ENCODE measurements at regions of chr2 and their contacts with region 1.

Region 1: DNA sequence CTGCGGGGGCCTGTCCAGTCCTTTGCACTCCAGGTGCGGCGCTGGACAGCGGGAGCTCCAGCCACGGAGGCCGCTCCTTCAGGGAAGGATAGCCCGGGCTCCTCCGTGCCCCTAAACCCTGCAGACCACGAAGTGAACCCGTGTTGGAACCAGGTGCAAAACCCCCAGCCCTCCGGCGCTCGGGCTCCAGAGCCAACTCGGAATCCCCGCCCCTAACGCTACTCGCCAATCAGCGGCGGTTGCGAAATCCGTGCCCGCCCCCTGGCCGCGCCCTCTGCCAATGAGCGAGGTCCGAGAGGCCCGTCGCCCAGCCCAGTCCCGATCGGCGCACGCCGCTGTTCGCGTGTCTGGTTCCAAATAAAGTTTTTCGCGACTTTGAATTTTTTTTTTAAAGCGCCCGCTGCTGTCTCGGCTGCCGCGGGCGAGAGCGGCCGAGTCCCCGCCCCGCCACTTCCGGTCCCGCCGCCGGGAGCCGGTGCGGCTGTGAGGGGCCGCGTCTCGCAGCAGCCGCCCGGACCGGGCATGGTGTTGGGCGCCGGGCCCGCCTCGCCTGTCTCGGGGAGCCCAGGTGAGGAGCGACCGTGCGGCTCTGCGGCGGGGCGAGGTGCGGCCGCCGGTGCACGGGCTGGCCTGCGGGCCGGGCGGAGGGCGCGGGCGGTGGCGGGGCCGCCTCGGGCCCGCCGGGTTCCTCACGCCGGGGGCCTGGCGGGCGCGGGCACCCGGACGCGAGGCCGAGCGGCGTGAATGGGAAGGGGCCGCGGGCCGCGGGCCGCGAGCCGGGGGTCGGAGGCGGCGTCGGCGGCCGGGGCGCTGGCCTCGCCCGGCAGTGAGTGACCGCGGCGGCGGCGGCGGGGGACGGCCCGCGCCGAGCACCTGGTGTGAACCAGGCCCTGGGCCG is at the start of gene UBE2F:
- DNase-seq: peak; percentile 97
- ATAC-seq: peak; percentile 94
- H3K4me3 ChIP-seq: peak within 1 kb of the TSS; percentile 54 to 96 (median 73)
- H3K4me3 Mint-ChIP-seq: peak within 1 kb of the TSS; percentile 81
- H3K27ac ChIP-seq: peak within 1 kb of the TSS; percentile 45 to 50
- H3K27ac Mint-ChIP-seq: peak within 1 kb of the TSS; percentile 88
- H3K4me1 ChIP-seq: peaks cover 27 to 32% of the 10 kb centered on the region in 2 donors
- H3K4me1 Mint-ChIP-seq: peaks cover 36% of the 10 kb centered on the region
- H3K27me3 ChIP-seq: no peaks in the 10 kb centered on the region
- H3K27me3 Mint-ChIP-seq: no peaks in the 10 kb centered on the region
- CTCF ChIP-seq: no peak
- total RNA-seq, gene UBE2F: 56.6 and 57.6 TPM in 2 replicates

Region 2: GRCh38 chr2:237594514-237594871 is 372.3 kb before region 1 on chr2:
- CTCF ChIA-PET with region 1: no interaction called
- POLR2A ChIA-PET with region 1: no interaction called
- intact Hi-C with region 1: no loop called
- DNase-seq: no peak
- ATAC-seq: no peak
- H3K4me3 ChIP-seq: no peak overlapping the region
- H3K4me3 Mint-ChIP-seq: no peak overlapping the region
- H3K27ac ChIP-seq: no peak overlapping the region
- H3K27ac Mint-ChIP-seq: no peak overlapping the region
- H3K4me1 ChIP-seq: peaks cover 9 to 10% of the 10 kb centered on the region in 2 donors
- H3K4me1 Mint-ChIP-seq: peaks cover 18% of the 10 kb centered on the region
- H3K27me3 ChIP-seq: peaks cover 0 to 4% (median 0%) of the 10 kb centered on the region in 4 experiments
- H3K27me3 Mint-ChIP-seq: peaks cover 3% of the 10 kb centered on the region
- CTCF ChIP-seq: no peak

Region 3: GRCh38 chr2:237691908-237692600 is 274.8 kb before region 1 on chr2:
- CTCF ChIA-PET with region 1: no interaction called
- POLR2A ChIA-PET with region 1: no interaction called
- intact Hi-C with region 1: loop called (anchors 5 kb)
- DNase-seq: peak; percentile 94
- ATAC-seq: peak; percentile 66
- H3K4me3 ChIP-seq: peak overlapping the region; percentile 87 to 94 (median 92)
- H3K4me3 Mint-ChIP-seq: peak overlapping the region; percentile 91
- H3K27ac ChIP-seq: peak overlapping the region; percentile 94 to 95
- H3K27ac Mint-ChIP-seq: peak overlapping the region; percentile 87
- H3K4me1 ChIP-seq: peaks cover 70 to 79% of the 10 kb centered on the region in 2 donors
- H3K4me1 Mint-ChIP-seq: peaks cover 78% of the 10 kb centered on the region
- H3K27me3 ChIP-seq: no peaks in the 10 kb centered on the region
- H3K27me3 Mint-ChIP-seq: no peaks in the 10 kb centered on the region
- CTCF ChIP-seq: no peak

Region 4: DNA sequence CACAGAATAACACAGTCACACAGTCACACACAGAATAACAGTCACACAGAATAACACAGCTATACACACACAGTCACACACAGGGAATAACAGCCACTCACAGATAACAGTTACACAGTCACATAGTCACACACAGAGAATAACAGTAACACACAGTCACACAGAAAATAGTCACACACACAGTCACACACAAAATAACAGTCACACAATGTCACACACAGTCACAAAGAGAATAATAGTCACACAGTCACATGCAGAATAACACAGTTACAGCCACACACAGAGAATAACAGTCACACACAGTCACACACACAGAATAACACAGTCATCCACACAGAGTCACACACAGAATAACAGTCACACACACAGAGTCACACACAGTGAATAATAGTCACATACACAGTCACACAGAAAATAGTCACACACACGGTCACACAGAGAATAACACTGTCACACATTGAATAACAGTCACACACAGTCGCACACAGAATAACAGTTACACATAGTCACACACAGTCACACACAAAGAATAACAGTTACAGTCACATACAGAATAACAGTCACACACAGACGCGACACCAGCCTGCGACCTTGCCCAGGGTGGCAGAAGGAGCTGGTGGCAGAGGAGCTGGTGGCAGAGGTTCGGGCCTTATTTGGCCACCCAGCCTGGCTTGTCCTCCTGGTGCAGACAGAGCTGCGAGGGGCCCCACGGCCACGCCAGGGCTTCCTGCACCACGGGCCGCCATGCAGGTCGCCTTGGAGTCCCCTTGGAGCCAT is 56.0 kb before region 1 on chr2:
- CTCF ChIA-PET with region 1: no interaction called
- POLR2A ChIA-PET with region 1: no interaction called
- intact Hi-C with region 1: no loop called
- DNase-seq: no peak
- ATAC-seq: no peak
- H3K4me3 ChIP-seq: no peak overlapping the region
- H3K4me3 Mint-ChIP-seq: no peak overlapping the region
- H3K27ac ChIP-seq: no peak overlapping the region
- H3K27ac Mint-ChIP-seq: no peak overlapping the region
- H3K4me1 ChIP-seq: no peaks in the 10 kb centered on the region
- H3K4me1 Mint-ChIP-seq: peaks cover 10% of the 10 kb centered on the region
- H3K27me3 ChIP-seq: no peaks in the 10 kb centered on the region
- H3K27me3 Mint-ChIP-seq: no peaks in the 10 kb centered on the region
- CTCF ChIP-seq: no peak

Region 5: DNA sequence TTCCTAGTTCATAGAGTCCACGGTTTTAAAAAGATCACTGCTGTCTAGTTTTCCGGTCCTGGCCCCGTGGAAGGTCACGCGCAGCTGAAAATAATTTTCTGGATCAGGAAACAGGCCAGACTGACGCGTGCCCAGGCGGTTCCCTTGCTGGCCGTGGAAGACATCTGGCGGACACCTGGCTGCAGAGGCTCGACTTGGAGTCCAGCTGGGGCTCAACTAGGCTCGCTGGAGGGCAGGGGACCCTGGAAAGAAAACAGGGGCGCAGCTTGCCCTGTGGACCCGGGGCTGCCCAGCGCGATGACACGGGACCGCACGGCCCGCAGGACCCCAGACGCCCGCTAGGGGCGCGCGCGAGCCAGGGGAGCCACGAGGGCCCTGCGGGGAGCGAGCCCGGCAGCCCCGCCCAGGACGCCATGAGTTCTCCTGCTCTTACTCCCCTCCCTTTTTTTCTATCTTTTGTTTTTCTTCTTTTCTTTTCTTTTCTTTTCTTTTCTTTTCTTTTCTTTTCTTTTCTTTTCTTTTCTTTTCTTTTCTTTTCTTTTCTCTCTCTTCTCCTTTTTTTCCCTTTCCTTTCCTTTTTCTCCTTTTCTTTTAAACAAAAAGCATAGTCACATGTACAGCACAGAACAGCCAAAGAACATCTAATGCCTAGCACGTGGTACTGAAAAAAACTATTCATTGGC is 43.2 kb before region 1 on chr2:
- CTCF ChIA-PET with region 1: interaction called, 6 read pairs
- POLR2A ChIA-PET with region 1: no interaction called
- intact Hi-C with region 1: loop called (anchors 5 kb)
- DNase-seq: peak; percentile 83
- ATAC-seq: peak; percentile 99
- H3K4me3 ChIP-seq: peak overlapping the region in 3 of 5 experiments; percentile 15 to 41 (median 30)
- H3K4me3 Mint-ChIP-seq: peak overlapping the region; percentile 65
- H3K27ac ChIP-seq: no peak overlapping the region
- H3K27ac Mint-ChIP-seq: peak overlapping the region; percentile 15
- H3K4me1 ChIP-seq: peaks cover 0 to 5% of the 10 kb centered on the region in 2 donors
- H3K4me1 Mint-ChIP-seq: peaks cover 18% of the 10 kb centered on the region
- H3K27me3 ChIP-seq: peaks cover 0 to 8% (median 0%) of the 10 kb centered on the region in 4 experiments
- H3K27me3 Mint-ChIP-seq: no peaks in the 10 kb centered on the region
- CTCF ChIP-seq: peak; percentile 99

Region 6: GRCh38 chr2:238097998-238098871 is 131.4 kb after region 1 on chr2:
- CTCF ChIA-PET with region 1: no interaction called
- POLR2A ChIA-PET with region 1: no interaction called
- intact Hi-C with region 1: loop called (anchors 2 kb)
- DNase-seq: peak; percentile 73
- ATAC-seq: peak; percentile 97
- H3K4me3 ChIP-seq: peak overlapping the region in 2 of 5 experiments; percentile 26 to 41
- H3K4me3 Mint-ChIP-seq: peak overlapping the region; percentile 84
- H3K27ac ChIP-seq: no peak overlapping the region
- H3K27ac Mint-ChIP-seq: peak overlapping the region; percentile 88
- H3K4me1 ChIP-seq: peaks cover 15 to 22% of the 10 kb centered on the region in 2 donors
- H3K4me1 Mint-ChIP-seq: peaks cover 18% of the 10 kb centered on the region
- H3K27me3 ChIP-seq: no peaks in the 10 kb centered on the region
- H3K27me3 Mint-ChIP-seq: no peaks in the 10 kb centered on the region
- CTCF ChIP-seq: no peak

Region 7: DNA sequence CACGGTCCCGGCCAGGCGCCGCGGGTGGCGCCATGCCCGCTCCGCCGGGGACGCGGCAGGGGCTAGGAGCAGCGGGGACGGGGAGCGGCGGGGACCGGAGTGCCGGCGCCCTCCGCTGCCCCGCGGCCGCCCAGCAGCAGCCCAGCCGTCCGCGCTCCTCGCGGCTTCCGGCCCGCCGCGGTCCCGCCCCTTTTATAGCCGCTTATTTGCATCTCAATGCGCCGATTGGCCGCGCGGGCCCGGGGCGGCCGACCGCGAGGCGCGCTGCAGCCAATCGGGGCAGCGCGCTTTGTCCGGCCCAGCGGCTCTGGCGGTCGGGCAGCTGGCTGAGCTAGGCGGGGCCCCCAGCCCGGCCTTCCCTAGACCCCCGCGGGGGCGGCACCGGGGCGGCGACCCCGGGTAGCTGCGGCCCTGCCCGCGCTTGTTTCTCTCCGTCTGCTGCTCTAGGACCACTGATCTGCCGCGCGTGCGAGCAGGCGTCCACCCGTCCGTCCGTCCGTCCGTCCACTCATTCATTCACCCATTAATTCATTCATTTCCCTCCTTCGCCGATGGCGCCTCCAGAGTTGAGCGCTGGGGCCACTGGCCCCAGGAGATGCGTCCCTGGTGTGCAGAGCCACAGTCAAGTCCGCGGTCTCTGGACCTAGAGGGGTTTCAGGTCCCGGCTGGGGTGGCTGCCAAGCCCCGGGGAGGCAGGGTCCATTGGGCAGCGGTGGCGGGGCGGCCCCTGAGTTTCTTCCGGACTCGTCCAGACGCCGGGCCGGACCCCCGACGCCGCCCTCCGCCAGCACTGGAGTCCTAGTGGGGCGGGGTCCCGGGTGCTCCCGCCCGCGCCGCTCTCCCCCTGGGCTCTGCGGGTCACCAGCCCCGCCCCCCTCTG is 273.3 kb after region 1 on chr2 and contains the start of gene HES6:
- CTCF ChIA-PET with region 1: no interaction called
- POLR2A ChIA-PET with region 1: no interaction called
- intact Hi-C with region 1: loop called (anchors 2 kb)
- DNase-seq: peak; percentile 86
- ATAC-seq: peak; percentile 83
- H3K4me3 ChIP-seq: peak within 1 kb of the TSS; percentile 38 to 76 (median 58)
- H3K4me3 Mint-ChIP-seq: peak within 1 kb of the TSS; percentile 94
- H3K27ac ChIP-seq: no peak within 1 kb of the TSS
- H3K27ac Mint-ChIP-seq: peak within 1 kb of the TSS; percentile 82
- H3K4me1 ChIP-seq: peaks cover 14 to 15% of the 10 kb centered on the region in 2 donors
- H3K4me1 Mint-ChIP-seq: peaks cover 15% of the 10 kb centered on the region
- H3K27me3 ChIP-seq: peaks cover 0 to 45% (median 16%) of the 10 kb centered on the region in 4 experiments
- H3K27me3 Mint-ChIP-seq: peaks cover 13% of the 10 kb centered on the region
- CTCF ChIP-seq: no peak
- total RNA-seq, gene HES6: 8.8 and 14.3 TPM in 2 replicates

Measured in B cell (primary cell).